H1 (cell line): ENCODE measurements at regions of chr14 and their contacts with region 1.

Region 1: GRCh38 chr14:59897761-59898383 is 22.1 kb upstream of the LRRC9 start:
- DNase-seq: peak in 1 of 2 experiments; percentile 10
- H3K4me3 ChIP-seq: no peak overlapping the region
- H3K27ac ChIP-seq: no peak overlapping the region
- H3K4me1 ChIP-seq: no peaks in the 10 kb centered on the region
- H3K27me3 ChIP-seq: no peaks in the 10 kb centered on the region
- CTCF ChIP-seq: peak; percentile 52 to 81 (median 76)
- EP300 ChIP-seq: no peak
- POLR2A ChIP-seq: no peak
- RAD21 ChIP-seq: peak; percentile 92

Region 2: GRCh38 chr14:59688224-59689170 is 209.4 kb before region 1 on chr14:
- CTCF ChIA-PET with region 1: interaction called, 25 read pairs
- POLR2A ChIA-PET with region 1: no interaction called
- DNase-seq: peak; percentile 19 to 76
- H3K4me3 ChIP-seq: no peak overlapping the region
- H3K27ac ChIP-seq: no peak overlapping the region
- H3K4me1 ChIP-seq: no peaks in the 10 kb centered on the region
- H3K27me3 ChIP-seq: no peaks in the 10 kb centered on the region
- CTCF ChIP-seq: peak; percentile 61 to 85 (median 78)
- EP300 ChIP-seq: no peak
- POLR2A ChIP-seq: no peak
- RAD21 ChIP-seq: peak; percentile 75 to 79

Region 3: DNA sequence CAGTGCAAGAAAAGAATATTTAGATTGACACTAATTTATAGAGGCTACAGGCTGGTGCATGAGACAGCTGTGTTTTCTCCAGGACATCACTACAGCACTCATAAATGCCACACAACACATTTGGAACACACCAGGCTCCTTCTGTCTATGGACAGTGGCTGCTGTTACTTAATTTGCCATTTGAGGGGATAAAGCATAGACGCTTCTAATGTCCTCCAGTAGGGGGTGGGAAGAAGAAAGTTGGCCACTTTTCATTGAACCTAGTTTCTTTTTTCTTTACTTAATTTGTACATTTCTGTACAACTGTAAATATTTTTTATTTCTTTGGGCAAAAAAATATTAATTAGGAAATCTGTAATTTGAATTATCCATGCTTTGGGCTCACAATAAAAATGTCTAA is 14.9 kb before region 1 on chr14:
- CTCF ChIA-PET with region 1: interaction called, 30 read pairs
- POLR2A ChIA-PET with region 1: no interaction called
- DNase-seq: no peak
- H3K4me3 ChIP-seq: no peak overlapping the region
- H3K27ac ChIP-seq: no peak overlapping the region
- H3K4me1 ChIP-seq: no peaks in the 10 kb centered on the region
- H3K27me3 ChIP-seq: no peaks in the 10 kb centered on the region
- CTCF ChIP-seq: peak in 2 of 3 experiments; percentile 14 to 55; a peak in 2 of 4 replicates
- EP300 ChIP-seq: no peak
- POLR2A ChIP-seq: no peak
- RAD21 ChIP-seq: peak in 1 of 2 experiments; percentile 14; a peak in 1 of 4 replicates

Region 4: GRCh38 chr14:59918824-59919569 is 21.1 kb after region 1 on chr14:
- CTCF ChIA-PET with region 1: interaction called, 25 read pairs
- POLR2A ChIA-PET with region 1: interaction called, 3 read pairs
- DNase-seq: no peak
- H3K4me3 ChIP-seq: peak overlapping the region; percentile 67 to 87 (median 80)
- H3K27ac ChIP-seq: peak overlapping the region; percentile 80; the same call in 1 of the 2 replicates
- H3K4me1 ChIP-seq: peaks cover 0 to 4% (median 1%) of the 10 kb centered on the region in 4 experiments; a peak in 3 of 7 replicates
- H3K27me3 ChIP-seq: no peaks in the 10 kb centered on the region
- CTCF ChIP-seq: peak in 2 of 3 experiments; percentile 17 to 27; a peak in 2 of 4 replicates
- EP300 ChIP-seq: no peak
- POLR2A ChIP-seq: no peak
- RAD21 ChIP-seq: peak in 1 of 2 experiments; percentile 32; a peak in 2 of 4 replicates